ENCODE measurements at regions of chr4 and their contacts with region 1.

Region 1: DNA sequence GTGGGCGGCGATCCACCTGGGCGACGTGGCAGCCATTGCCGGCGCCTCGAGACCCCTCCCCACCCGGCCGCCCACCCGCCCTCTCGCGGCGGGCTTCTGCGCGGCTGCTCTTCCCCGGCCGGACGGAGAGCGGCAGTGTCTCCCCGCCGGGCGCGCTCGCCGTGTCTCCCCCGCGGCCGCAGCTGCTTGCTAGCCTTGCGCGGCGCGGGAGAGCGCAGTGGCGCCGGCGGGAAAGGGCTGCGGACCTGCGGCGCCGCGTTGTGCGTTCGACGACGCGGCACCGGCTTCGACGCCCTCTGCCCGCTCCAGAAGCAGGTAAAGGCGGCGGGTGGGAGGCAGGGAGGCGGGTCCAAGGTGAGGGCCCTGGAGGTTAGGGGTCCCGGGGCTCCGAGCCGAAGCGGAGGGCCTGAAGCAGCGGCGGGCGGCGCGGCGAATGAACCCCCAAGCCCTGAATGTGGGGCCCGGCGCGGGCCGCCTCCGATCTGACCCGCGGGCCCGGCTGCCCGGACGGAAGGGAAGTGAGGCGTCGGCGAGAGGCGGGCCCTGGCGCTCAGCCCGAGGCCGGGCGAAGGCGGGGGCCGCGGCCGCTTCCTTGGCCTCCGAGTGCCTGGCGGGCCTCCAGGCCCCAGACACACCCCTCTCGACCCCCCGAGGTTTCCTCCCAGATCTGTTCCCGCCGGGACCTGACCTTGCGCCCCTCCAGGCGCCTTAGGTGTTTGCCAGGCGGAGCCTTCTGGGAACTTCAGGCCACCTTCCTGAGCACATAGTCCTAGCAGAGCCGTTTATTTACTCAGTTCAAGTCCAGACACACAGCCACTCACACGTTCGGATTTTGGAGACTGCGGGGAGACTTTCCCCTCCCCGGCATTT is at the start of gene N4BP2:
- DNase-seq: peak; percentile 76
- H3K4me3 ChIP-seq: peak within 1 kb of the TSS; percentile 66 to 98 (median 85)
- H3K27ac ChIP-seq: peak within 1 kb of the TSS; percentile 80
- H3K4me1 ChIP-seq: peaks cover 13% of the 10 kb centered on the region
- H3K27me3 ChIP-seq: no peaks in the 10 kb centered on the region
- CTCF ChIP-seq: peak; percentile 28 to 74
- total RNA-seq, gene N4BP2: 5.7 to 5.8 TPM

Region 2: DNA sequence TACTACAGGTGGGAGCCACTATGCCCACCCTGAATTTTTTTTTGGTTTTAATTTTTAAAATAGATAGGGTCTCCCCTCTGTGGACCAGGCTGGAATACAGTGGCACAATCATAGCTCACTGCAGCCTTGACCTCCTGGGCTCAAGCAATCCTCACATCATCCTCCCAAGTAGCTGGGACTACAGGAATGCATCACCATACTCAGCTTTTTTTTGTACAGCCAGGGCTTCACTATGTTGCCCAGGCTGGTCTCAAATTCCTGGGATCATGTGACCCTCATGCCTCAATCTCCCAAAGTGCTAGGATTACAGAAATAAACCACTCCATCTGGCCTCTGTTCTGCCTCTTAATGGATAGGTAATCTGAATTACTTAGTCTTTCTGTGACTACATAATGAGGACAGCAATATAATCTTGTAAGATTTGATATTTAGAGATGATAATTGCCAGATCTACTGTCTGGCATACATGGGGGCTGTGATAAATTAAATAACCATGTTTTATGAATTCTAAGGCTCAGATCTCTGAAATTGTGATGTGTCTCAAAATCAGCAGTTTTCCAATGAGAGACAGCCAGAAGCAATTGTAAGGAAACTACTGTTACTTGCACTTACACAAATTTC is 106.0 kb before region 1 on chr4:
- CTCF ChIA-PET with region 1: no interaction called
- dilution Hi-C with region 1: no loop called
- in situ Hi-C with region 1: no loop called
- intact Hi-C with region 1: no loop called
- DNase-seq: no peak
- H3K4me3 ChIP-seq: no peak overlapping the region
- H3K27ac ChIP-seq: no peak overlapping the region
- H3K4me1 ChIP-seq: no peaks in the 10 kb centered on the region
- H3K27me3 ChIP-seq: no peaks in the 10 kb centered on the region
- CTCF ChIP-seq: no peak

Region 3: DNA sequence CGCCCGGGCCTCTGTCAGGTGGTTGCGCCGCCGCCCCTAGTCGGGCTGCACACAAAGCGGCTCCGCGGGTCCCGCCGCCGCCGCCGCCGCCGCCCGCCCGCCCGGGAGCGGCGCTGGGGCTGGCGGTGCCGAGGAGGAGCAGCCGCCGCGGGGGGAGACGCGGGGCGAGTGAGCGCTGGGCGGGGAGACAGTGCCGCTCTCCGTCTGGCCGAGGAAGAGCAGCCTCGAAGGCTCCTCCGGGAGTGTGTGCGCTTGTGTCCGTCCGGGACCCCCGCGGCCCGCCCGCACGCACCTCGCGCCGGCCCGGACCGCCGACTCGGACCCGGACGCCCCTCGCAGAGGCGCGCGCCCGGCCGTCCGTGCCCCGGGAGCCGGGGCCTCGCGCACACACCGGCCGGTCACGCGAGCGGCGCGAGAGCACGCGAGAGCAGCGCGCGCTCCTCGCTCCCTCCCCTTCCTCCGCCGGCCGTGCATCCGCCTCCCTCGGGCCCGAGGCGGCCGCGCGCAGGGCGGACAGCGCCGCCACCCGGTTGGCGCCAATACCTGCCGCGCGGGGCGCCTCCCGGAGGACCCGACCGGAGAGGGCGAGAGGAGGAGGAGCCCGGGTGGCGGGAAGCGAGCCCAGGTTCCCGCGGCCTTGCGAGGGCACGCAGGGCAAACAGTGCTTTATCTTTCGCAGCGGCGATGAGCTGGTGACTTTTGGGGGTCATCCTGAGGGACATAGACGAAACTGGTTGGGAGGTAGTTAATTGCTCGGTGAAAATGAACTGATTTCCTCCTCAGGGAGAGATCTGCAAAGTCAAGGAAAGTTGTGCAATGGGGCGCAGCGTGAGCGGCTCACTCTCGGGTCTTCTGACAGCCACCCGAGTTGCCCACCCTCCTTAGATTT is 79.2 kb before region 1 on chr4 and contains the start of gene PDS5A:
- CTCF ChIA-PET with region 1: no interaction called
- dilution Hi-C with region 1: loop called (anchors 5 kb)
- in situ Hi-C with region 1: no loop called
- intact Hi-C with region 1: loop called (anchors 1 kb)
- DNase-seq: peak; percentile 94
- H3K4me3 ChIP-seq: peak within 1 kb of the TSS; percentile 85 to 96 (median 87)
- H3K27ac ChIP-seq: peak within 1 kb of the TSS; percentile 80
- H3K4me1 ChIP-seq: peaks cover 10% of the 10 kb centered on the region
- H3K27me3 ChIP-seq: no peaks in the 10 kb centered on the region
- CTCF ChIP-seq: peak; percentile 73 to 83
- total RNA-seq, gene PDS5A: 72.2 to 78.5 TPM

Region 4: DNA sequence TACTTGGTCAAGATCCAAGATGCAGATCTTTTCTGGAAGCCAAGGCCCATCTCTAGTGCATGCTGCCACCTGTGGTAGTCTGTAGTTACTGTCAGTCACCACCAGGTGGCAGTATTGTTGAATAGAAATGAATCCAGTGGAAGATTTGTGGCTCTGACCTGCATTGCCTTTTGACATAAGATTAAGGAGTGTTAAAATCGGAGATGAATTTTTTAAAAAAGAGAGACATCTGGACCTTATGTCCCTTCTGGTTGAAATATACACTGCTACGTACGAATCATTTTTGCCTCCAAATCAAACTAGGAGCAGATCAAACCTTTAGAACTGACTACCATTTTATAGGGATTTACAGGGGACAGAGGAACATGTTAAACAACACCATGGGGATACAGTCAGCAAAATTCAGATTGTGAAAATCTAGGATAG is 93.0 kb after region 1 on chr4:
- CTCF ChIA-PET with region 1: interaction called, 4 read pairs
- dilution Hi-C with region 1: no loop called
- in situ Hi-C with region 1: no loop called
- intact Hi-C with region 1: loop called (anchors 1 kb)
- DNase-seq: peak; percentile 72
- H3K4me3 ChIP-seq: no peak overlapping the region
- H3K27ac ChIP-seq: no peak overlapping the region
- H3K4me1 ChIP-seq: no peaks in the 10 kb centered on the region
- H3K27me3 ChIP-seq: no peaks in the 10 kb centered on the region
- CTCF ChIP-seq: peak; percentile 72 to 79

Region 5: DNA sequence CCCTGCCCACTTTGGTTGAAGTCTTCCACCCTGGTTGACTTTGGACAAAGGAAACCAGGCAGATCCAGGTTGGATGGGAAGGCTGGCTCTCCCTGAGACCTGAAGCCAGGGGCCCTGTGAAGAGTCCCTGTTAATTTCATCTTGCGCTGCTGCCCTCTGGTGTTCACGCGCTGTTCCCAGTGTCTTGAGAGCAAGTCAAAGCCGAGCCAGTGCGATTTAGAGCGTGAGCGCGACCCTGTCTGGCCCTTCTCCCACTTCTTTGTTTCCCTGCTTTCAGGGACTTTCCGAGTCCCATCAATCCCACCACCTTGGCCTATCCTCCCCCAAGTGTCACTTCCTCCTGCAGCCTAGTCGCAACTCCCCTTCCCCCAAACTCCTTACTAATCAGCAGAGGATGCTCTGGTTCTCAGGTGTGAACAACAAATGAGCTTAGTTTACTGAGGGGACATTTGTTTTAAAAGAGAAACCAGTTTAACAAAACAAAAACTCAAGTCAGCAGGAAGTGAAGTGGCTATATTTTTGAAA is 252.4 kb after region 1 on chr4:
- CTCF ChIA-PET with region 1: interaction called, 3 read pairs
- dilution Hi-C with region 1: no loop called
- in situ Hi-C with region 1: loop called in 1 of 2 experiments (anchors 10 kb)
- intact Hi-C with region 1: loop called (anchors 1 kb)
- DNase-seq: peak; percentile 74
- H3K4me3 ChIP-seq: peak overlapping the region in 1 of 3 experiments; percentile 29
- H3K27ac ChIP-seq: peak overlapping the region; percentile 22
- H3K4me1 ChIP-seq: no peaks in the 10 kb centered on the region
- H3K27me3 ChIP-seq: no peaks in the 10 kb centered on the region
- CTCF ChIP-seq: peak; percentile 81 to 93

Region 6: DNA sequence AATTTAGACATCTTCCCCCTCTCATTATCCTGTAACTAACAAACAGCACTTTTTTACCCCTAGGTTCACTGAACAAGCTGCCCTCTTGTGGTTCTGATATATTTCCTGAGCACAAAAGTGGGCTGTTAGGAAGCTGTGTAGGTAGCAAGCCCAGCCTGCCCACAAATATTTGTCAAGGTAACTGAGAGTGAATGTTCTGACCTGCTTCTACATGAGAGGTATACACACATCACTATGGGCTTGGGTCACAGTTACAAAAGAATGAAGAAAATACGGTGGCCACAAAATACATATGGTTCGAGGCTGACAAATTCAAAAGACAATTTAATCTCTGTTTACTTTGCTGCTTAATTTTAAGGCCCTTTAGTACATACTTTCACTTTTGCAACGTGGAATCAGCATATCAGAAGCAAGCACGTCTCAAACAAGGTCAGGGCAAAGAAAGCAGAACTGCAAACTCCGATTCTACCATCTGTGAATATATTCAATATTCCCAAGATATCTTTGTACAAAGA is 494.1 kb after region 1 on chr4:
- CTCF ChIA-PET with region 1: no interaction called
- dilution Hi-C with region 1: no loop called
- in situ Hi-C with region 1: no loop called
- intact Hi-C with region 1: loop called (anchors 2 kb)
- DNase-seq: peak; percentile 78
- H3K4me3 ChIP-seq: peak overlapping the region in 2 of 3 experiments; percentile 5 to 22
- H3K27ac ChIP-seq: peak overlapping the region; percentile 53
- H3K4me1 ChIP-seq: peaks cover 5% of the 10 kb centered on the region
- H3K27me3 ChIP-seq: no peaks in the 10 kb centered on the region
- CTCF ChIP-seq: peak; percentile 39 to 54

Measured in mammary epithelial cell (primary cell).